ENCODE measurements at regions of chr5 and their contacts with region 1.

Region 1: DNA sequence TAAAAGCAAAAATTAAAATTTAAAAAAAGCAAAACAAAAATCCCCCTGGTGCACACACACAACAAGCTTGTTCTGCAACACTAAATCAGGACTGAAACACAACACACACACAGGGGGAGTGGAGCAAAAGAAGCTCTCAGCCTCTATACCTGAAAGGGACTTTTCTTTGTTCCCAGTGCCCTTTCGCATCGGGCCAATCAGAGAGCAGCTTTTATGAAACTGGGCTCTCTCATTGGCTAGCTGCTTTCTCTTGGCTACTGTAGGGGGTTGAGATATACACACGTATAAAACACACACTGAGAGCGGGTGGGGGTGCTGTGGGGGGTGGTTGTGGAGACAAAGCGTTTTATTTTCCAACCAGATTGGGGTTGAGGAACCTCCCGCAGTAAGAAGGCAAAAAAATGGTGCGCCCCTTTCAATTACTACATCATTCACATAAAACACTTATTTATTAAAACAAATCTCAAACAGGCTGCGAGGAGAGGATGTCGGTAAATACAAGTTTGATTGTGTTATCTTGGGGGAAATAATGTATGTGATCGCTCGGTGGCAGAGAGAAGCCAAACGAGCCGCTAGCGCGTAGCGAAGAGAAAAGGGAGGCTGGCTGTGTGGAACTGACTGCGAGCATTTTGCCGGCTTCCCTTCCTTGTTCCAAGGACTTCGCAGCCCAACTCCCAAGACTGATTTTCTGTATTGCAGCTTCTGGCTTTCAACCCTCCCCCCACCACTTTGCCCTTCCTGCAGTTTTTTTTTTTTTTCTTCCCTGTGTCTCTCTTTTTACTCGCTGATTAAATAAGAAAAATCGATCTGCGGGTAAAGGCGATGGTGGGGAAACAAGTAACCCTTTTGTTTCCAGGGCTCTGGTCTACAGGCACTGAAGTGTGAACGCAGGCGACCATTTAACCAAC is 2.5 kb upstream of the ZNF608 start:
- DNase-seq: peak; percentile 97
- H3K4me3 Mint-ChIP-seq: no peak overlapping the region
- H3K27ac Mint-ChIP-seq: no peak overlapping the region
- H3K4me1 Mint-ChIP-seq: peaks cover 12% of the 10 kb centered on the region
- H3K27me3 Mint-ChIP-seq: no peaks in the 10 kb centered on the region
- CTCF ChIP-seq: no peak

Region 2: DNA sequence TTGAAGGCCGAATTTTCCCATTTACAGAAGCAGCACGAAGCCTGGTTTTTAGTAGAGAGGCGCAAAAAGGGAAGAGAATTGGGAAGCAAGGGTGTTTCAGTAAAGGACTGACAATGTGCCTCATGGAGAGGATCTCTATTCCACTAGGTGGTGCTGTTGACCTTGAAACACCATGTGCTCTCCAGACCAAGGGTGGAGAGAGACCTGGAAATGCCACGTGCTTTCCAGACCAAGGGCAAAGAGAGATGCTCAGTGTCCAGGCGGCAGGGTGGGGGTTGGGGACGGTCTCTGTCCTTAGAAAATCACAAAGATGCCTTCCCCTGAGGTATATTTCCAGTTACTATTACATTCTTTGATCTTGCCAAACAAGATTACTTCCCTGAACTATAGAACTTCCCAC is 811.7 kb before region 1 on chr5:
- CTCF ChIA-PET with region 1: interaction called, 3 read pairs
- POLR2A ChIA-PET with region 1: no interaction called
- intact Hi-C with region 1: loop called (anchors 2 kb)
- DNase-seq: peak; percentile 85
- H3K4me3 Mint-ChIP-seq: no peak overlapping the region
- H3K27ac Mint-ChIP-seq: no peak overlapping the region
- H3K4me1 Mint-ChIP-seq: peaks cover 7% of the 10 kb centered on the region
- H3K27me3 Mint-ChIP-seq: no peaks in the 10 kb centered on the region
- CTCF ChIP-seq: peak; percentile 86

Region 3: GRCh38 chr5:124655922-124656511 is 92.9 kb before region 1 on chr5:
- CTCF ChIA-PET with region 1: interaction called, 3 read pairs
- POLR2A ChIA-PET with region 1: interaction called, 16 read pairs
- intact Hi-C with region 1: no loop called
- DNase-seq: peak; percentile 90
- H3K4me3 Mint-ChIP-seq: no peak overlapping the region
- H3K27ac Mint-ChIP-seq: no peak overlapping the region
- H3K4me1 Mint-ChIP-seq: peaks cover 39% of the 10 kb centered on the region
- H3K27me3 Mint-ChIP-seq: no peaks in the 10 kb centered on the region
- CTCF ChIP-seq: no peak

Region 4: DNA sequence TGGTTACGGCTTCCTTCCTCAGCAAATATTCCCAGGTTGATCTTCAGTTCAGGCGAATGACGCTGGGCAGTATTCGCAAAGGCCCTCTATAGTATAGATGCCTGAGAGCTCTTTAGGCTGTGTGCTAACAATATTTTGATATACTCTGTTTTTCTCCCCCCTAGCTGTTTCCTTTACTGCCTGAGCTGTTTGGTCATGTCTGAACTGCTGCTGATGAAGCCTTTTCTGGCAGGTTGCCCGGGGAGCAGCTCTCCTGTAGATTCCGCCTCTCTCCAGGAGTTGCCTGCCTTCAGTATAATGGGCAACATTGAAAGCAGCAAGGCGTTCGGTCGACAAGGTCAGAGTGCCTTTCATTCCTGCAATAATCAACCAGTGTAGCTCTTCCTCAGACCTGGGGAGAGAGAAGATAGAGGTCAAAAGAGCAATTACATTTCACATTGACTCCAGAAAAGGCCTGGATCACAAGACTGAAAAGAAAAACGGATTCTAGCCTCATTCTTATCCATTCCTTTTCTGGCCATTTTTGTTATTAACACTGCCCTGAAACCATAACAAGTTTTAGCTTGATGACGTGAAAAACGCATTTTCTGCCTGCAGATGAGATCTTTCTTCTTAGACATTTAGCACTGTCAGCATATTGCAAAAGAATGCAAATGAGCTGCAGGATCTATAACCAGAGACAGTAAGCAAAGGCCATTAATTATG is 57.6 kb after region 1 on chr5:
- CTCF ChIA-PET with region 1: interaction called, 3 read pairs
- POLR2A ChIA-PET with region 1: interaction called, 42 read pairs
- intact Hi-C with region 1: no loop called
- DNase-seq: peak; percentile 96
- H3K4me3 Mint-ChIP-seq: no peak overlapping the region
- H3K27ac Mint-ChIP-seq: no peak overlapping the region
- H3K4me1 Mint-ChIP-seq: peaks cover 5% of the 10 kb centered on the region
- H3K27me3 Mint-ChIP-seq: no peaks in the 10 kb centered on the region
- CTCF ChIP-seq: no peak

Region 5: GRCh38 chr5:124963236-124963961 is 214.5 kb after region 1 on chr5:
- CTCF ChIA-PET with region 1: interaction called, 3 read pairs
- POLR2A ChIA-PET with region 1: no interaction called
- intact Hi-C with region 1: loop called (anchors 1 kb)
- DNase-seq: peak; percentile 99
- H3K4me3 Mint-ChIP-seq: peak overlapping the region; percentile 12
- H3K27ac Mint-ChIP-seq: peak overlapping the region; percentile 73
- H3K4me1 Mint-ChIP-seq: peaks cover 34% of the 10 kb centered on the region
- H3K27me3 Mint-ChIP-seq: no peaks in the 10 kb centered on the region
- CTCF ChIP-seq: no peak

Region 6: DNA sequence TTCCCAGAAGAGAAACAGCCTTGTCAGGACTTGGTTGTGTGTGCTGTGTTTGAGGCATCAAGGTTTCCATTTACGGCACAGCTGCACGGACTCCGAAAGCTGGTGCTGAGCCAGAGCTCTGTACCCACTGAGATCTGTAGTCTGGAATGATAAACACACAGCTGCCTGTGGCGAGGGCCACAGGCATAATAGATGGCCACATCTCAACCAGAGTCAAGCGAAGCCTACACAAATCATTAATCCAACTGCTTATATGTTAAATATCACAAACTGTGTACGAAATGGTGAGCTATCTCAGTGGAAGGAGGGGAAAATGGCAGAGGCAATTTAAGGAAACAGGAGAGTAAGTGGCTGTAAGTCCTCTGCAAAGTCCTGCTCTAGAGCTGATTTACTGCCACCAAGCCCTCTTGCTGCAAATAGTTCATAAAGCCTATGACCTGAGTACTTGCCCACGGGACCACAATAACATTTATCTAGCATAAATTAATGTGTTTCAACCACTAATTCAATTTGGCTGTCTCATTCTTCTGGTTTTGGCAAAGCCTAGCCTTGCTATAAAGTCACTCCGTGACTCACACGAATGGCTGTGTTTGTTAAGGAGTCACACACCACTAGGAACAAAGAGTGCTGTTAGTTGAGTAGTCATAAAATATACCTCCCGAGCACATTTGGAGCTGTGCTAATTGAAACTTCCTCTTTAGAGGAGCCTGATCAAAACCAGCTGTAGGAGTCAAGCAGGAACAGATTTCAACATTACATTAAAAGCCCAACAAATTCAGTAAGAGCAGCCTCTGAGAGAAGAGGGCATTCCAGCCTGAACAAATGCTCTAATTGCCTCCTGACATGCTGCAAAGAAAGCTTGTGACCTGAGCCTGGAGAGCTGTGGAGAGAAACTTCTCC is 736.1 kb after region 1 on chr5:
- CTCF ChIA-PET with region 1: no interaction called
- POLR2A ChIA-PET with region 1: interaction called, 5 read pairs
- intact Hi-C with region 1: loop called (anchors 10 kb)
- DNase-seq: peak; percentile 98
- H3K4me3 Mint-ChIP-seq: peak overlapping the region; percentile 64
- H3K27ac Mint-ChIP-seq: peak overlapping the region; percentile 84
- H3K4me1 Mint-ChIP-seq: peaks cover 51% of the 10 kb centered on the region
- H3K27me3 Mint-ChIP-seq: no peaks in the 10 kb centered on the region
- CTCF ChIP-seq: no peak

Measured in MCF 10A (cell line).